ENCODE measurements at regions of chr11 and their contacts with region 1.

Region 1: DNA sequence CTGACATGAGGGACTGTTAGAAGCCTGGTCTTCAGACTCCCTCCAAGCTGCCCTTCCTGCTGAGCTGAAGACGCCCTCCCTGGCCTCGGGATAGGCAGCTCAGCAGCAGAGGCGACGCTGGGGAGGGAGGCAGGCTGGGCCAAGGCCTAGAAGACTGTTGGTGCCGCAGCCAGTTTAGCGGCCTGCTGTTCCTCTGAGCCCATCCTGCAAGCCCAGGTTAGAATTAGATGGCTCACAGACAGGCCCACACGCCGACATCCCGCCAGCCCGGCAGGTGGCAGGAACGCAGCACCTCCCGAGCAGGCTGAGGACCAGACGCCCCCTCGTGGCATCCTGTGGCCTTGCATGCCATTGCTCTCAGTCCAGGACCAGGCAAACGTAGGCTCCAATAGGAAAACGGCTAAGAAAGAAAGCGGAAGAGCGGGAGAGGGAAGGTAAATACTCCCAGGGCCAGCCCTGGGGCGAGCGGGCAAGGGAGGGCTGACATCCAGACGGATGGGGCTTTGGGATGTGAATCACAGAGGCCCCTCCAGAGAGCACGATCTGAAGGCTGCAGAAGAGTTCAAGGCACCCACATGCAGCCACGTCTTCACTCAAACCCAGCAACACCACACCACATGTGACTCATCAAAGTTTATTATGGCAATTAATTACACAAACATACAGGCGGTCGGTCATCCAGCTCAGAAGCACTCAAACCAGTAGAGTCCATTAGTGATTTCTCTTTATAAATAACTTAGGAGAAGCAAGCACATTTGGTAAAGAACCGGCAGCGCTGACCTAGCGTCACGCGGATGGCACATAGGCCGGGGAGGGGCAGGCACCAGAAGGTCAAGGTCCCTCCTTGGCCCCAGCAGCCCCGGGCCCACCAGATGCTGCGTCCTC is 27.6 kb downstream of the CD5 start:
- DNase-seq: peak; percentile 80 to 90
- H3K4me3 ChIP-seq: no peak overlapping the region
- H3K27ac ChIP-seq: peak overlapping the region in 1 of 2 donors; percentile 45
- H3K4me1 ChIP-seq: peaks cover 0 to 21% (median 13%) of the 10 kb centered on the region in 4 donors
- H3K27me3 ChIP-seq: no peaks in the 10 kb centered on the region
- CTCF ChIP-seq: peak; percentile 96 to 100

Region 2: GRCh38 chr11:60825571-60826189 is 304.2 kb before region 1 on chr11:
- intact Hi-C with region 1: loop called (anchors 5 kb)
- DNase-seq: no peak
- H3K4me3 ChIP-seq: no peak overlapping the region
- H3K27ac ChIP-seq: no peak overlapping the region
- H3K4me1 ChIP-seq: peaks cover 0 to 4% (median 0%) of the 10 kb centered on the region in 4 donors
- H3K27me3 ChIP-seq: peaks cover 0 to 1% of the 10 kb centered on the region in 2 donors
- CTCF ChIP-seq: no peak

Region 3: DNA sequence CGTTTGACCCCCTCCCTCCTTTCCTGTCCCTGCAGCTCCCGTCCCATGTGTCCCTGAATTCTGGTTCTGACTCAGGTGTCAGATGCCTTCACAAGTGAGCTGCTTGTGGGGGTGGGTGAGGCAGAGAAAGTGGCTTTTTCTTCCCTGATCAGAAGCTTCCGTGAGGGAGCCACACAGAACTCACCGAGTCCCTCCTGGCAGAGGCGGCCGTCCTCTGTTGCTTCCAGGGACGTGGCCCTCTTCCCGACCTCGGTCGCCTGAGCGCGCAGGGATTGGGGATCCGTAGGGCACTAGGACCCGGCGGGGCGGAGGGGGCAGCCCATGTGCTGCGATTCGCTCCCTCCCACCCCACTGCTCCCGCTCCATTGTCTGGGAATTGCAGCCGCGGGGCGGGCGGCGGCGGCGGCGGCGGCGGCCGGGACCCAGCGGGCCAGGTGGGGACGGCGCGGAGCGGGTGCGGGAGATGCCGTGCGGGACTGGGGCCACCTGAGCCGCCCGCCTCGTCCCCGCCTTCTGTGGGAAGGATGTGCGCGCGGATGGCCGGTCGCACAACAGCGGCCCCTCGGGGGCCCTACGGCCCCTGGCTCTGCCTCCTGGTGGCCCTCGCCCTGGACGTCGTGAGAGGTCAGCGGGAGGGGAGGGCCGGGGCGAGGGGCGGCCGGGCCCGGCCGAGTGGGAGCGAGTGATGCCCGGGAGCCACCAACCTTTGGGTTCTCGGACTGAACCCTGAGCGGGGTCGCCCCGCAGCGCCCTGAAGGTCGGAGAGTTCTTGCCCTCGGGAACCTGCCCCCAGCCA is 205.6 kb before region 1 on chr11 and contains the start of gene TMEM132A:
- intact Hi-C with region 1: loop called (anchors 10 kb)
- DNase-seq: no peak
- H3K4me3 ChIP-seq: peak within 1 kb of the TSS; percentile 52 to 70
- H3K27ac ChIP-seq: no peak within 1 kb of the TSS
- H3K4me1 ChIP-seq: peaks cover 0 to 29% (median 20%) of the 10 kb centered on the region in 4 donors
- H3K27me3 ChIP-seq: peaks cover 0 to 31% of the 10 kb centered on the region in 2 donors
- CTCF ChIP-seq: no peak

Region 4: GRCh38 chr11:61091373-61092279 is 38.3 kb before region 1 on chr11:
- intact Hi-C with region 1: no loop called
- DNase-seq: peak in 1 of 2 donors; percentile 37
- H3K4me3 ChIP-seq: no peak overlapping the region
- H3K27ac ChIP-seq: no peak overlapping the region
- H3K4me1 ChIP-seq: no peaks in the 10 kb centered on the region
- H3K27me3 ChIP-seq: no peaks in the 10 kb centered on the region
- CTCF ChIP-seq: no peak

Region 5: GRCh38 chr11:61161190-61162091 is 31.6 kb after region 1 on chr11 and contains the start of gene VPS37C:
- intact Hi-C with region 1: loop called (anchors 2 kb)
- DNase-seq: peak; percentile 83 to 93
- H3K4me3 ChIP-seq: peak within 1 kb of the TSS; percentile 68 to 85
- H3K27ac ChIP-seq: peak within 1 kb of the TSS; percentile 91 to 98
- H3K4me1 ChIP-seq: peaks cover 0 to 34% (median 22%) of the 10 kb centered on the region in 4 donors
- H3K27me3 ChIP-seq: no peaks in the 10 kb centered on the region
- CTCF ChIP-seq: peak; percentile 22 to 45

Region 6: DNA sequence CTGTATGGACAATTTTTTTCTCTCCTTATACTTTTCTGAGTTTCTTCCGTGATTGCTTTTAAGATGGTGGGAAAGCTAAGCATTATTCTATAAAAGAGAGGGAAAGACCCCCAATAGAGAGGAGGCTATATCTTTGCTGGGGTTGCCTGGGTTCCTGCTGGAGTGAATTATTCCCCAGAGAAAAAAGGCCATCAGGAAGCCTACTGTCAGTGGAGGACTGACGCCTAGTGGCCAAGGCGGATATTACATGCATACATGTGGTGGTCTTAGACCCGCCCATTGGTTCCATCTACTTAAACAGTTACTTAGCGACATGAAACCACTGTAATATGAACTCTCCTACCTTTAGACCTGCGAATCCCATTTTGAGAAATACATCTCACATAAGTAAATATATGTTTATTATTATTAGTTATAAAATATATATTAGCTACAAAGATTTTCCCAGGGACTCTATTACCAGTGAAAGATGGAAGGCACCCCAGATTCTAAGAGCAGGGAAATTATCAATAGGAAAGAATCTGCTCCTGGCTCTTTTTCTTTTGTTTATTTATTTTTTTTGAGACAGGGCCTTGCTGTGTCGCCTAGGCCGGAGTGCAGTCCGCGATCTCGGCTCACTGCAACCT is 57.7 kb after region 1 on chr11:
- intact Hi-C with region 1: loop called (anchors 5 kb)
- DNase-seq: peak; percentile 76 to 79
- H3K4me3 ChIP-seq: no peak overlapping the region
- H3K27ac ChIP-seq: no peak overlapping the region
- H3K4me1 ChIP-seq: no peaks in the 10 kb centered on the region
- H3K27me3 ChIP-seq: peaks cover 0 to 21% of the 10 kb centered on the region in 2 donors
- CTCF ChIP-seq: peak; percentile 85 to 87

Measured in tibial artery (tissue), 4 donors.